Dorsolateral prefrontal cortex (tissue), 120 donors: ENCODE measurements at regions of chr15 and their contacts with region 1.

Region 1: GRCh38 chr15:63504247-63504978 is at the start of gene USP3:
- DNase-seq: peak; percentile 81 to 93 (median 90)
- H3K4me3 ChIP-seq: peak within 1 kb of the TSS; percentile 56 to 88 (median 78)
- H3K27ac ChIP-seq: peak within 1 kb of the TSS; percentile 55 to 96 (median 90)
- H3K27me3 ChIP-seq: peaks cover 0 to 5% (median 0%) of the 10 kb centered on the region in 45 donors
- CTCF ChIP-seq: peak in 51 of 56 donors; percentile 15 to 73 (median 52)
- total RNA-seq, gene USP3: 11.5 to 36.2 (median 21.9) TPM

Region 2: DNA sequence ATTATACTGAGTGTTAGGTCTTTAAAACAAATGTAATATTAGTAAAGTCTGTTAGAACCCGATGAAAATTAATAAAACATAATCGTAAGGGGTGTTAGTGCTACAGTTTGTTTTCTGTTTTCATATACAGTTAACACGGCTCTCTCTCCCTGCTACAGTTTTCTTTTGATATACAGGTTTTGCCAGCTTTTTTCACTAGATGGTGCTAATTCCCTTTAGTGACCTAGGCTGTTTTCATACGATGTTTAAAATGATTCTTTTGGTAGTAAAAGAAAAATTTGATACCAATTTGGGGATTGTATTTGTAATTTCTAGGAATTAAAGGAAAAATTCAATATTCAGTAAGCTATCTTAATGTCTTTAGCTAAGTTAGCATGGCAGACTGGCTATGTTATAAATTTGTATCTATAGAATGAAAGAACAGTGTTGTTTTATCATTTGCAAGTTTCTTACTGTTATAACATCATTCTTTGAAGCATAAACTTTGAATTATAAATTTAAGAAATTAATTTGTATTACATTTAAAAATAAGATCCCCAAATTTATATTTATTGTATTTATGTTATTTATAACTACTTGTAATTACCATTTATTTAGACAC is 215.5 kb before region 1 on chr15:
- intact Hi-C with region 1: loop called in 1 of 2 experiments (anchors 10 kb)
- DNase-seq: no peak
- H3K4me3 ChIP-seq: peak overlapping the region in 8 of 59 donors; percentile 2 to 24 (median 10)
- H3K27ac ChIP-seq: peak overlapping the region in 19 of 59 donors; percentile 0 to 78 (median 32)
- H3K27me3 ChIP-seq: no peaks in the 10 kb centered on the region
- CTCF ChIP-seq: peak; percentile 50 to 92 (median 74)

Region 3: GRCh38 chr15:63466378-63467192 is 37.8 kb before region 1 on chr15:
- intact Hi-C with region 1: loop called in 1 of 2 experiments (anchors 2 kb)
- DNase-seq: peak in 1 of 10 donors; percentile 25
- H3K4me3 ChIP-seq: peak overlapping the region in 2 of 59 donors; percentile 10 to 26
- H3K27ac ChIP-seq: peak overlapping the region in 4 of 59 donors; percentile 5 to 54 (median 8)
- H3K27me3 ChIP-seq: no peaks in the 10 kb centered on the region
- CTCF ChIP-seq: peak; percentile 43 to 77 (median 62)

Region 4: DNA sequence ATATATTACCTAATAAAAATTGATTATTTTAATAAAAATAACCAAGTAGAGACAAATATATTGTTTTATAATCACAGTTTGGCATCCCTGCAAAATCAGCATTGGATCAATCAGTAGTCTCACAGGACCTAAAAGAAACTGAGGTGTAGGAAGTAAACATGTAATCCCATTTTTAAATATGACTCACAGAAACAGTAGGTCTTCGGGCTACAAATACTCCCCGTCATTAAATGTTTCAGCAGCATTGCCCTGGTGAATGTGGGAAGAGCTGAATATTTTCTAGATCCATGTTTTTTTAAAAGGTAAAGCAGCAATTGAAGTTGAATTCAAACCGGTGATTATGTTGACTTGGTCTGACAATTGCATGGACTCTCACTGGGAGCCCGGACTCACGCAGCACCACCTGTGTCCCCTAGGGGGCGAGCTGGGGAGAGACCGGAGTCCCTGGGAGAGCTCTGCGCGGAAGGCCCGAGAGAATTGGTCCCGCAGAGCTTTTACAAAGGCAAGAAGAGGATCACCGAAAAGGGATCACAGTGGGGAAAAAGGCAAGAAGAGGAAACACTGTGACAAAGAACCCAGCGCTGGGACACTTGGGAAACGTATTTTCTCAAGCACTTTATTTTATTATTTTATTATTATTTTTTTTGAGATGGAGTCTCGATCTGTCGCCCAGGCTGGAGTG is 17.2 kb before region 1 on chr15:
- intact Hi-C with region 1: loop called in 1 of 2 experiments (anchors 2 kb)
- DNase-seq: peak; percentile 74 to 88 (median 82)
- H3K4me3 ChIP-seq: peak overlapping the region in 4 of 59 donors; percentile 5 to 42 (median 20)
- H3K27ac ChIP-seq: no peak overlapping the region
- H3K27me3 ChIP-seq: no peaks in the 10 kb centered on the region
- CTCF ChIP-seq: peak in 55 of 56 donors; percentile 44 to 92 (median 83)

Region 5: DNA sequence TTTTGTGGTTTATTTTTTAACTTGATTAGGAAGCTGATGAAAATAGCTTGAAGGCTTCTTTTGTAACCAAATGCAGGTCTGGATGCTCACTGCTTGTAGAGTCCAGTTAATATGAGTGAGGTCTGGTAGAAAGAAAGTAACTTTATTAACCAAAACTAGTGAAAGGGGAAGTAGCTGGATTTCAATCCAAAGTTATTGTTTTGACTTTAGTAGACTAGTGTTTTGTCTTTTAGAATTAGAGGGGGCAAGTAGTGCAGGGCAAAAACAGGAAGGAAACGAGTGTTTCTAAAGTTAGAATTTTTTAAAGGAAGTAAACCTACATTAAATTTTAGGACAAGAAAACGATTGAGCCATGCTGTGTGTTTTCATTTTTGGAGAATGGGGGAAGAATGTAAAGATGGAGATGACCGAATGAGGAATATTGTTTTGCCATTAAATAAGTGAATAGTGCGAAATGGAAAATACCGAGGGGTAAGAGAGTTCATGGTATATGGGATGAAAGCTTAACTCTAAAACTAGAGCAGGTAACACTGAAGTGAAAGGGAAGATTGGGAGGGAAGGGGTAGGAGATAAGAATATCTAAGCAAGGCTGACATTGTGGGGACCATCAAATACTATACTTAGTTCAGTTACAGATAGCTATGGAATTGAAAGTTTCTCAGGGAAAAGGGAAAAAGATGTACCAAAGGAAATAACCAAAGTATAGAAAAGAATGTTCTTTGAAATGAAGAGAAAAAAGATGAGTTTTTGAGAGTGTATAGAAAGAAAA is 40.0 kb after region 1 on chr15:
- intact Hi-C with region 1: loop called in 1 of 2 experiments (anchors 5 kb)
- DNase-seq: no peak
- H3K4me3 ChIP-seq: peak overlapping the region in 1 of 59 donors; percentile 18
- H3K27ac ChIP-seq: no peak overlapping the region
- H3K27me3 ChIP-seq: no peaks in the 10 kb centered on the region
- CTCF ChIP-seq: no peak